OCI-LY7 (cell line): ENCODE measurements at regions of chr1 and their contacts with region 1.

Region 1: DNA sequence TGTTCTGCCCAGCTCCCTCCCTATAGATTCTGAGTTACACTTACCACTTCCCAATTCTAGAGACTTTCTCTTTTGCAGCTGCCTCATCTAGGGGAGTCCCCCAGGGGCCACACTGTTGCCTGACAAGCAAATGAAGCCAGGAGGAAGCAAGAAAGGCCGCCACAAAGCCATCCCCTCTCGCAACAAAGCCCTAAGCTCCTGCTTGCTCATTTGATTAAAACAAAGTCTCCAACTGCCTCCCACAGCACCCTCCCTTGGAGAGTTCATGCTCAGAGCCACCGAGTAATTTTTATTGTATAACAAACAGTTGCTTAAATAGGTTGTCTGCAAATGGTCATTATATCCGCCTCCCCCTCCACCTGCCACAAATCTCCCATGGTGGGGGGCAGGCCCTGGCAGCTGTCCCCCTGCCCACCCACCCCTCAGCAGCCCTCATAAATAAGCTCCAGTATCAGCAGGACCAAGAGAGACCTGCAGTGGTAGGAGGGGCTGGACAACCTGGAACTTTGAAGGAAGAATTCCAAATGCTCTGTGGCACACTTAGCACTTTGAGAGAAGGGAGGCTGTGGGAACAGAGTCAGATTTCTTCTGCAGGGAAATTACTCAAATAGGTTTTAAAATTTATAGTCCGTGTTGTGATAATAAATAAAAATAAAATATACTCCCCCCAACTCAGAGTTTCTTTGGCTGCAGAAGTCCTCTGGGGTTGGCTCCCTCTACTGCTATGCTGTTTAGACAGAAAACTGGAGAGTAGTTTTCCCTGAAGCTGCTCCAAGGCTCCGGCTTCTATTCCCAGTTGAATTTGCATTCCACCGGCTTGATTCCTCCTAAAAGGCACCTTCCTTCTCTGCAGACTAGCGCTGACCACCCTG is 237.5 kb downstream of the TTLL7 start:
- DNase-seq: peak; percentile 96
- H3K4me3 ChIP-seq: peak overlapping the region; percentile 63
- H3K27ac ChIP-seq: peak overlapping the region; percentile 96
- H3K4me1 ChIP-seq: peaks cover 69% of the 10 kb centered on the region
- CTCF ChIP-seq: peak; percentile 31

Region 2: GRCh38 chr1:82110855-82111254 is 1650.5 kb before region 1 on chr1:
- CTCF ChIA-PET with region 1: no interaction called
- POLR2A ChIA-PET with region 1: no interaction called
- intact Hi-C with region 1: loop called (anchors 10 kb)
- DNase-seq: no peak
- H3K4me3 ChIP-seq: no peak overlapping the region
- H3K27ac ChIP-seq: no peak overlapping the region
- H3K4me1 ChIP-seq: peaks cover 33% of the 10 kb centered on the region
- CTCF ChIP-seq: no peak

Region 3: DNA sequence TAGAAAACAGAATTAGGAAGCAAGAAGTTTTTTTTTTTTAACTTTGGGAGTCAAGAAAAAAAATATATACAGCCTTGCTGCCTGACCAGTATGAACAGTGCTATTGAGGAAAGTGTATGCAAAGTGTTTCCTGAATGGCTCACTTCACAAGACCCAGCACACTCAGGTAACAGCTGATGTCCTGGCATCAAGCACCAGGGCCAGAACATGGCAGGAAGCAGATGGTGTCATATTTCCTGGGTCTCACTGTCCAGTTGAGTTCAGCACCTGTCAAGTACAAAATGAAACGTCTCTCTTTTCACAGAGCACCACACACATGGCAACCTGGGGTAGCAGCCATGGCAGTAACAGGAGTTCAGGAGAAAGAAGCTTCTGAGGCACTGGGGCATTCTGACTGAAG is 134.8 kb before region 1 on chr1:
- CTCF ChIA-PET with region 1: no interaction called
- POLR2A ChIA-PET with region 1: interaction called, 4 read pairs
- intact Hi-C with region 1: loop called (anchors 5 kb)
- DNase-seq: peak; percentile 85
- H3K4me3 ChIP-seq: peak overlapping the region; percentile 13
- H3K27ac ChIP-seq: peak overlapping the region; percentile 36
- H3K4me1 ChIP-seq: peaks cover 19% of the 10 kb centered on the region
- CTCF ChIP-seq: no peak

Region 4: DNA sequence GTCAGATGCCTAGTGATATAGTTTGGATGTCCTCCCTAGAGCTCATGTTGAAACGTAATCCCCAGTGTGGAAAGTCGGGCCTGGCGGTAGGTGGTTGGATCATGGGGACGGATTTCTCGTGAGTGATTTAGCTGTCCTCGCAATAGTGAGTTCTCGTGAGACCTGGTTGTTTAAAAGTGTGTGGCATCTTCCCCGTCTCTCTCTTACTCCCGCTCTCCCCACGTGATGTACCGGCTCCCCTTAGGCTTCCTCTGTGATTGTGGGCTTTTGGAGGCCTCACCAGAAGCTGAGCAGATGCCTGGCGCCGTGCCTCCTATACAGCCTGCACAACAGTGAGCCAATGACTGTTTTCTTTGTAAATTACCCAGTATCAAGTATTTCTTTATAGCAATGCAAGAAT is 27.0 kb before region 1 on chr1:
- CTCF ChIA-PET with region 1: no interaction called
- POLR2A ChIA-PET with region 1: interaction called, 10 read pairs
- intact Hi-C with region 1: no loop called
- DNase-seq: no peak
- H3K4me3 ChIP-seq: no peak overlapping the region
- H3K27ac ChIP-seq: no peak overlapping the region
- H3K4me1 ChIP-seq: no peaks in the 10 kb centered on the region
- CTCF ChIP-seq: no peak

Region 5: GRCh38 chr1:83741348-83741747 is 20.1 kb before region 1 on chr1:
- CTCF ChIA-PET with region 1: interaction called, 3 read pairs
- POLR2A ChIA-PET with region 1: interaction called, 14 read pairs
- intact Hi-C with region 1: no loop called
- DNase-seq: no peak
- H3K4me3 ChIP-seq: no peak overlapping the region
- H3K27ac ChIP-seq: no peak overlapping the region
- H3K4me1 ChIP-seq: peaks cover 20% of the 10 kb centered on the region
- CTCF ChIP-seq: no peak

Region 6: DNA sequence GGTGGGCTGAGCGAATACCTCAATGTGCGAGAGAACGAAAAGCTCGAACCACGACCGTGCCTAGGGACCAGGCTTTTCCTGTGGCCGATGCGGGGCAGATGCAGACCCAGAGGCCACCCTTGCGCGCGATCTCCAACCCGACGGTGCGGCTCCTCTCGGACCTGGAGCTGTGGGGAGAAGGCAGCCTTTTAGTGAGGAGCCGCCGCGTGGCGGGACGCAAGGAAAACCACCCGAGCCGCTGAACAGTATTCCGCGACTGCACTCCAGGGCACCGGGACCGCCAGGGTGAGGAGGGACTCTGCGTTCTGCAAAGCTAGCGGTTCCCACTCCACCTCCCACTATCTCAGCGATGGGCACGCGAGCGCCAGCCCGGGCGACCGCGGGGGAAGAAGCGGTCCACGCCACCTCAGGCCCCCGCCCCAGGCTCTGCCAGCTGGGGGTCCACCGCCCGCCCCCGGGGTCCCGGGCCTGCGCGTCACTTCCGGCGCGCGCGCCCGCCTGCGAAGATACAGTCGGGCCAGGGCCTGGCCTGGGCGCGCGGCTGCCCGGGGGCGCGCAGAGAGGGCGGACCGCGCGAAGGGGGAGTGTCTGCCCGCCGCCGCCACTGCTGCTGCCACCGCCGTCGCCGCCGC is 316.2 kb after region 1 on chr1:
- CTCF ChIA-PET with region 1: no interaction called
- POLR2A ChIA-PET with region 1: no interaction called
- intact Hi-C with region 1: loop called (anchors 5 kb)
- DNase-seq: peak; percentile 89
- H3K4me3 ChIP-seq: peak overlapping the region; percentile 80
- H3K27ac ChIP-seq: peak overlapping the region; percentile 32
- H3K4me1 ChIP-seq: peaks cover 15% of the 10 kb centered on the region
- CTCF ChIP-seq: no peak

Region 7: DNA sequence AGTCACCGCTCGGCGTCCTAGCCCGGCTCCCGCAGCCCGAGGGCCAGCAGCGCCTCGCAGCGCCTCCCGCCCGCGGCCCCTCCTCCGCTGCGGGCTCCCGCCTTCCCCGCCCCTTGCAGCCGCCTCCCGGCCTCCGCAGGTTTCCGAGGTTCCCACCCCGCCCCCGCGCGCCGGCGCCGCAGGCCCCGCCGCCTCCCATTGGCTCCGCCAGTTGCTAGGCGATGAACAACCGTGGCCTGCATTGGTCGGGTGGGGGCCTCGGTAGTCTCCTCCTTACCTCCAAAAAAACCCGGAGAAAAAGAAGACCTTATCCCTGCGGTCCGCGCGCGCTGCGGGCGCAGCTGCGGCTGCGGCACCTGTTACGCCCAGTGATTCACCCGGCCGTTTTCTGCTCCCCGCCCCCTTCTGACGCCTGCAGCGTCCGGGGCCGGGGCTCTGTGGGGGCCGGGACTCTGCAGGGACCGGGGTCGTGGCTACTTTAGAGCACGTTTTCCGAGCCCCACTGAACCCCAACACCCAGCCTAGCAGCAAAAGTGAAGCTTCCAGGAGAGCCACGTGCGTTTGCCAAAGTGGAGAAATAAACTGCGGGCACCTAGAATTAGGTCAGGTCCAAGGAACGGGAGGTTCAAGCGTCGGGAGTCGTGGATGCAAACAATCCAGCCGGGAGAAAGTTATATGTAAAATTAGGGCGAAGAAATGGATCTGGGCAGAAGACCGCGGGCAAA is 929.2 kb after region 1 on chr1 and contains the start of gene SSX2IP:
- CTCF ChIA-PET with region 1: no interaction called
- POLR2A ChIA-PET with region 1: interaction called, 3 read pairs
- intact Hi-C with region 1: loop called (anchors 10 kb)
- DNase-seq: peak; percentile 97
- H3K4me3 ChIP-seq: peak within 1 kb of the TSS; percentile 84
- H3K27ac ChIP-seq: peak within 1 kb of the TSS; percentile 77
- H3K4me1 ChIP-seq: peaks cover 48% of the 10 kb centered on the region
- CTCF ChIP-seq: no peak
- total RNA-seq, gene SSX2IP: 24.1 and 29.9 TPM in 2 replicates